Activated CD8-positive, alpha-beta memory T cell treated with anti-CD3 and anti-CD28 coated beads, Interleukin-2, amount 10 ng/mL, durations not matched to agents 7 days and 5 days (primary cell): ENCODE measurements at regions of chr19 and their contacts with region 1.

Region 1: GRCh38 chr19:984165-984967 is at the start of gene WDR18:
- DNase-seq: peak; percentile 94
- ATAC-seq: peak; percentile 93
- H3K4me3 Mint-ChIP-seq: peak within 1 kb of the TSS; percentile 90
- H3K27ac Mint-ChIP-seq: peak within 1 kb of the TSS; percentile 89
- H3K4me1 Mint-ChIP-seq: peaks cover 29% of the 10 kb centered on the region
- H3K27me3 Mint-ChIP-seq: no peaks in the 10 kb centered on the region
- total RNA-seq, gene WDR18: 64.5 to 87.9 TPM

Region 2: GRCh38 chr19:771332-771785 is 213.0 kb before region 1 on chr19:
- CTCF ChIA-PET with region 1: interaction called, 12 read pairs
- DNase-seq: peak; percentile 61
- ATAC-seq: no peak
- H3K4me3 Mint-ChIP-seq: no peak overlapping the region
- H3K27ac Mint-ChIP-seq: no peak overlapping the region
- H3K4me1 Mint-ChIP-seq: peaks cover 3% of the 10 kb centered on the region
- H3K27me3 Mint-ChIP-seq: peaks cover 2% of the 10 kb centered on the region

Region 3: DNA sequence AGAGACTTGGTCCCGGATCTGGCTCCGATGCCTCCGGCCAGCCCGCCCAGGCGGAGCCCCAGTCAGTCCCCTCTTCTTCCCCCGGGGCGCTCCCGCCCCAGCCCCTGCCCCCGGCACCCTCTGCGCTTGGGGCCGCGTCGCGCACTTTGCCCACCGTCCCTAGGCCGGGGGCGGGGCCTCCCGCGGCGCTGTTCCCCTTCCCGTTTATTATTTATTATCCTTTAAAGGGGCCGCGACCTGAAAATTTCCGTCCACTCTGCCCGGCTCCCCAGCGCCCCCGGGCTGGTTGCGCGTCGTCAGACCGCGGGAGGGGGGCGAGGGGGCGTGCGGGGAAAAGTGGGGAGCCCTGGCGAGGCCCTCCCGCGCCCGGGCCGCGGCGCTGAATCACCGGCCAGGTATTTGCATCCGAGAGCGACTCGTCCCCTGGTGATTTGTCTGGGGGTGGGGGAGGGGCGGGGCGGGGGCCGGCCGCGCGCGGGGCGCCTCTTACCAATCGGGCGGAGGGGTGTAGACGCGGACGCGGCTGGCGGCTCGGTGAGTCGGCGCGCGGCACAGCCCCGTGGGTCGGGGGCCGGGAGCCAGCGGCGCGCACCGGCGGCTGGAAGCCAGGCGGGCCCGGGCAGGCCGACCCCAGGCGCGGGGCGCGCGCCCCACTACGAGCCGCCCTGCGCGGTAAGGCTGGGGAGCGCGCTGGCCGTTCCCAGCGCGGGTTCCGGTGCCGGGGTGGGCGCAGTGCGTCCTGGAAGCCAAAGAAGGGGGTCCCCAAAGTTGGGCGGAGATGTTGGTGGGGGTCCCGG is 58.6 kb before region 1 on chr19 and contains the start of gene ARID3A:
- CTCF ChIA-PET with region 1: interaction called, 163 read pairs
- DNase-seq: peak; percentile 82
- ATAC-seq: peak; percentile 68
- H3K4me3 Mint-ChIP-seq: peak within 1 kb of the TSS; percentile 77
- H3K27ac Mint-ChIP-seq: peak within 1 kb of the TSS; percentile 75
- H3K4me1 Mint-ChIP-seq: peaks cover 17% of the 10 kb centered on the region
- H3K27me3 Mint-ChIP-seq: no peaks in the 10 kb centered on the region
- total RNA-seq, gene ARID3A: 30.6 to 35.9 TPM

Region 4: DNA sequence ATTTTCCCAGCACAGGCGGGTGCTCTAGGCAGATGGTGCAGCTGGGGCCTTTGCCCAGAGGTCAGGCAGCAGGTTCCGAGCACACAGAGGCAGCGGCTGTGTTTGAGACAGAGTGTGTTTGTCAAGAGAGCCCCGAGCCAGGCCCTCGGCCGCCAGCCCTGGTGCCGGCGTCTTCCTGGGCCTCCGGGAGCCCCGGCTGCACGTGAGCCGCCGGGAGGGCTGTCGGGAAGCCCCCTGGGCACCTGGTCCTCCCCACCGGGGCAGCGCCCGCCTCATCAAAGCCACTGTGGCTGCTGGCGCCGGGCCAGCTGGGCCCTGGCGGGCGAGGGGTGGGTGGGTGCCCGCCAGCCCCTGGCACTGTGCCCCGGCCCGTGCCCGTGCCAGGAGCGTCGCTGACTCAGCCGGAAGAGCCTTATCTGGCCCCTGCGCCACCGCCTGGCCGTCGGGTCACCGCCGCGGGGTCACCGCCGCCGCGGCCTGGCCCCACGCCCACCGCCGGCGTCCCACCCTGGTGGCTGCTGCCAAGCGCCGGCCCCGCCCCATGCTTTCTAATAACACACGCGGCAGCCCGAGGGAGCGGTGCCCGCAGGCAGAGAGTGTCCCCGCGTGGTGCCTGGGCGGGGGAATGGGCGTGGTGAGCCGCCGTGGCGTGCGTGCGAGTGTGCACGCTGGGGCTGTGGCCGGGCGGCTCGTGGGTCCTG is 43.6 kb before region 1 on chr19:
- CTCF ChIA-PET with region 1: interaction called, 12 read pairs
- DNase-seq: peak; percentile 66
- ATAC-seq: peak; percentile 64
- H3K4me3 Mint-ChIP-seq: peak overlapping the region; percentile 38
- H3K27ac Mint-ChIP-seq: no peak overlapping the region
- H3K4me1 Mint-ChIP-seq: peaks cover 27% of the 10 kb centered on the region
- H3K27me3 Mint-ChIP-seq: no peaks in the 10 kb centered on the region

Region 5: GRCh38 chr19:996051-996838 is 11.9 kb after region 1 on chr19:
- CTCF ChIA-PET with region 1: interaction called, 23 read pairs
- DNase-seq: peak; percentile 80
- ATAC-seq: peak; percentile 56
- H3K4me3 Mint-ChIP-seq: no peak overlapping the region
- H3K27ac Mint-ChIP-seq: peak overlapping the region; percentile 52
- H3K4me1 Mint-ChIP-seq: peaks cover 15% of the 10 kb centered on the region
- H3K27me3 Mint-ChIP-seq: peaks cover 35% of the 10 kb centered on the region

Region 6: DNA sequence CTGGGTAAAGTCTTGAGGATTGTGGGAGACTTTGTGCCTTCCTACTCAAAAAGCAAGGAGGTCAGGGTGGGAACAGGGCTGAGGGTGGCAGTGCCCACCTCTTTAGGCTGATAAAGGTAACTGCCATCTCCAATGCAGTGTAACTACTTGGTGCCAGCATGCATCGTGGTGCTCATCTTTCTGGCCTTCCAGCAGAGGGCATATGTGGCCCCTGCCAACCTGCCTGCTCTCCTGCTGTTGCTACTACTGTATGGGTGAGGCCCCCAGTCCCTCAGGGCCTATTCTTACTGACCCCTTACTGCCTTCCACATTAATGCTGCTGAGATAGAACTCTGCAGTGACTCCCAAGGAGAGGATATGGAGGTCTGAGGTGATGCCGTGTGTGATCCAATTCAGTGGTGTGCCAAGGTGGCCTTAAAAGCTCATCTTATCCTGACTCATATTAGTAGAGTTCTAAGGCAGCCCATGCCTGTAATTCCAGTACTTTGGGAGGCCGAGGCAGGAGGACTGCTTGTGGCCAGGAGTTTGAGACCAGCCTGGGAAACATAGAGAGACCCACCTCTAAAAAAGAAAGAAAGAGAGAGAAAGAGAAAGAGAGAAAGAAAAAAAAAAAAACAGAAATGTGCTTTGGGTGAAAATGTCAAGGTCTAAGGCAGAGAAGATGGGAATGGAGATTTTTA is 73.0 kb after region 1 on chr19:
- CTCF ChIA-PET with region 1: no interaction called
- DNase-seq: peak; percentile 65
- ATAC-seq: peak; percentile 72
- H3K4me3 Mint-ChIP-seq: no peak overlapping the region
- H3K27ac Mint-ChIP-seq: peak overlapping the region; percentile 66
- H3K4me1 Mint-ChIP-seq: peaks cover 8% of the 10 kb centered on the region
- H3K27me3 Mint-ChIP-seq: no peaks in the 10 kb centered on the region